Activated CD4-positive, alpha-beta T cell treated with anti-CD3 and anti-CD28 coated beads for 36 hours (primary cell): ENCODE measurements at regions of chr14 and their contacts with region 1.

Region 1: GRCh38 chr14:20400965-20401593 is 12.2 kb downstream of the TEP1 start:
- DNase-seq: peak; percentile 37
- ATAC-seq: peak; percentile 95
- H3K4me3 Mint-ChIP-seq: peak overlapping the region; percentile 29
- H3K27ac Mint-ChIP-seq: peak overlapping the region; percentile 88
- H3K4me1 Mint-ChIP-seq: peaks cover 34% of the 10 kb centered on the region
- H3K27me3 Mint-ChIP-seq: no peaks in the 10 kb centered on the region

Region 2: GRCh38 chr14:20327005-20327869 is 73.8 kb before region 1 on chr14:
- CTCF ChIA-PET with region 1: interaction called, 15 read pairs
- POLR2A ChIA-PET with region 1: interaction called, 4 read pairs
- intact Hi-C with region 1: no loop called
- DNase-seq: no peak
- ATAC-seq: peak; percentile 71
- H3K4me3 Mint-ChIP-seq: no peak overlapping the region
- H3K27ac Mint-ChIP-seq: peak overlapping the region; percentile 44
- H3K4me1 Mint-ChIP-seq: peaks cover 37% of the 10 kb centered on the region
- H3K27me3 Mint-ChIP-seq: no peaks in the 10 kb centered on the region

Region 3: DNA sequence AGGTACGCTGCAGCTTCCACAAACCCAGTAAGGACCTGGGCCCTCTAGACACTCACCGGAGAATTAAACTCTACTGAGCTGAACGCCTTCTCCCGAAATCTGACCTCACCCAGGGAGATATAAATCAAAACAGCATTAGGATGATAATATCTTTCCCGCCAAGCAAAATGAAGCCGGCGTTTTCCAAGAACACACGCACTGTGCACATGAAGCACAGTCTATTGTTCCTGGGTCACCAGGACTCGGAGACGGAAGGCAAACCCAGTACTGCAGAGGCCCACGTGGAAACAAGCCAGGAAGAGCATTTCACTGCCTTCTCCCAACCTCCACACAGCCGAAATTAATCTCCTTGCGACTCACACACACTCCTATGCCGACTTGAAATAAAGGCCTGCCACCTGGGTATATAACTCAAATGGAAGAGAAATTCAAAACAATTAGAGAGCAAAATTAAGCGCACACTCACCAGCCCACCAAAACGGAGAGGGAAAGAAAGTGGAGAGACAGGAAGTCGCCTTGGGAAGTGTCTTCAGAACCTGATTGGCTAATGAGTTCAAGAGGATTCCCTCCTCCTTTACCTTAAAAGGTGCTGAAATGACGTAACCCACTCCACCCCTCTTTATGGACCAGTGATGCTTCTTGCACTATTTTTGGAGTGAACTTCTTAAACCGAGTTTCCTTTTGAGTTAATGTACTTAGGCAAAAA is 68.1 kb before region 1 on chr14 and contains the start of gene CCNB1IP1:
- CTCF ChIA-PET with region 1: interaction called, 15 read pairs
- POLR2A ChIA-PET with region 1: interaction called, 4 read pairs
- intact Hi-C with region 1: loop called in 1 of 2 experiments (anchors 1 kb)
- DNase-seq: peak; percentile 59
- ATAC-seq: peak; percentile 99
- H3K4me3 Mint-ChIP-seq: peak within 1 kb of the TSS; percentile 98
- H3K27ac Mint-ChIP-seq: peak within 1 kb of the TSS; percentile 95
- H3K4me1 Mint-ChIP-seq: peaks cover 35% of the 10 kb centered on the region
- H3K27me3 Mint-ChIP-seq: no peaks in the 10 kb centered on the region
- total RNA-seq, gene CCNB1IP1: 57.4 to 67.0 TPM

Region 4: DNA sequence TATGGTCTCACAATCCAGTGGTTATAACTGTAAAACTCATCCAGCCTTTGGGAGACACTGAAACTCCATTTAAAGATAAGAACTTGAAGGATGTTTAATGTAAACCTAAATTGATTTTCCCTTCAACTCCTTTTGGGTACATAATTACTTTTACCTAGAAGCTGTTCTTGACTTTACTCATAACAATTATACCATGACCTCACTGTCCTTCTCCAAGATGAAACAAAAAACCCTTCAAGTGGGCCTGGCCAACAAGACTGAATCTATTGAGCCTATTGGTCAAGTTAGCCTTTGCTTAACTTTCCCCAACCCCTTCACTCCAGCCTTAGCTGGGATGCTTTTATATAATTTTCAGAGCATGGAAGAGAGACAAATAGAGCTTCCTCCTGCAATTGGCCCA is 35.2 kb before region 1 on chr14:
- CTCF ChIA-PET with region 1: interaction called, 3 read pairs
- POLR2A ChIA-PET with region 1: no interaction called
- intact Hi-C with region 1: loop called in 1 of 2 experiments (anchors 1 kb)
- DNase-seq: no peak
- ATAC-seq: no peak
- H3K4me3 Mint-ChIP-seq: no peak overlapping the region
- H3K27ac Mint-ChIP-seq: peak overlapping the region; percentile 68
- H3K4me1 Mint-ChIP-seq: peaks cover 24% of the 10 kb centered on the region
- H3K27me3 Mint-ChIP-seq: no peaks in the 10 kb centered on the region

Region 5: GRCh38 chr14:20387576-20387975 is 13.5 kb before region 1 on chr14:
- CTCF ChIA-PET with region 1: no interaction called
- POLR2A ChIA-PET with region 1: no interaction called
- intact Hi-C with region 1: no loop called
- DNase-seq: no peak
- ATAC-seq: no peak
- H3K4me3 Mint-ChIP-seq: no peak overlapping the region
- H3K27ac Mint-ChIP-seq: no peak overlapping the region
- H3K4me1 Mint-ChIP-seq: no peaks in the 10 kb centered on the region
- H3K27me3 Mint-ChIP-seq: no peaks in the 10 kb centered on the region

Region 6: GRCh38 chr14:20469242-20469889 is 68.3 kb after region 1 on chr14 and contains the start of gene PNP:
- CTCF ChIA-PET with region 1: interaction called, 3 read pairs
- POLR2A ChIA-PET with region 1: no interaction called
- intact Hi-C with region 1: loop called in 1 of 2 experiments (anchors 2 kb)
- DNase-seq: peak; percentile 93
- ATAC-seq: peak; percentile 93
- H3K4me3 Mint-ChIP-seq: peak within 1 kb of the TSS; percentile 91
- H3K27ac Mint-ChIP-seq: peak within 1 kb of the TSS; percentile 97
- H3K4me1 Mint-ChIP-seq: peaks cover 37% of the 10 kb centered on the region
- H3K27me3 Mint-ChIP-seq: no peaks in the 10 kb centered on the region
- total RNA-seq, gene PNP: 160 to 164 TPM

Region 7: DNA sequence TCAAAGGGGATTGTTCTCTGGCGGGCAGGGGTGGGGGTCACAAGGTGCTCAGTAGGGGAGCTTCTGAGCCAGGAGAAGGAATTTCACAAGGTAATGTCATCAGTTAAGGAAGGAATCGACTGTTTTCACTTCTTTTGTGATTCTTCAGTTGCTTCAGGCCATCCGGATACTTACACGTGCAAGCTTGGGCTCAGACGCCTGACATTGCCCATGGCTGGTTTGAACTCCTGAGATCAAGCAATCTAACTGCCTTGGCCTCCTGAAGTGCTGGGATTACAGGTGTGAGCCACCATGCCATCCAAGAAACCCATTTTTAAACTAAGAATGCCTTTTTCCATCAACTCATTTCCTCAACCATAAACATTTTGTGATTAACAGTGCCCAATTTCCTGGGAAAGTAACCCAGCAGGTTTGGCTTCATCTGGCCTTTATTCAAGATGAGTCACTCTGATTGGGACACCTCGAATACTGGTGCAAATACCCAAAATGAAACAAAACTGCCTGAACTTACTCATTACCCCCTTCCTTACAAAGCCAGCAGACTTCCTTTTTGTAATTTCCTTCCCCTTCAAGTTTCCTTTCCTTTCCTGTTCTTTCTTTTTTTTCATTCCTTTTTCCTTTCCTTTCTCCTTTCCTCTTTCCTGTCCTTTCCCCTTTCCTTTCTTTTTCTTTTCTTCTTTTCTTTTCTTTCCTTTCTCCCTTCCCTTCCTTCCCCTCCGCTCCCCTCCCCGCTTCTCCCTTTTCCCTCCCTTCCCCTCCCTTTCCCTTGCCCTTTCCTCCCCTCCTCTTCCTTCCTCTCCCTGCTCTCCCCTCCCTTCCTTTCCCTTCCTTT is 94.1 kb after region 1 on chr14:
- CTCF ChIA-PET with region 1: no interaction called
- POLR2A ChIA-PET with region 1: no interaction called
- intact Hi-C with region 1: loop called in 1 of 2 experiments (anchors 5 kb)
- DNase-seq: no peak
- ATAC-seq: peak; percentile 73
- H3K4me3 Mint-ChIP-seq: no peak overlapping the region
- H3K27ac Mint-ChIP-seq: peak overlapping the region; percentile 64
- H3K4me1 Mint-ChIP-seq: peaks cover 55% of the 10 kb centered on the region
- H3K27me3 Mint-ChIP-seq: no peaks in the 10 kb centered on the region

Region 8: DNA sequence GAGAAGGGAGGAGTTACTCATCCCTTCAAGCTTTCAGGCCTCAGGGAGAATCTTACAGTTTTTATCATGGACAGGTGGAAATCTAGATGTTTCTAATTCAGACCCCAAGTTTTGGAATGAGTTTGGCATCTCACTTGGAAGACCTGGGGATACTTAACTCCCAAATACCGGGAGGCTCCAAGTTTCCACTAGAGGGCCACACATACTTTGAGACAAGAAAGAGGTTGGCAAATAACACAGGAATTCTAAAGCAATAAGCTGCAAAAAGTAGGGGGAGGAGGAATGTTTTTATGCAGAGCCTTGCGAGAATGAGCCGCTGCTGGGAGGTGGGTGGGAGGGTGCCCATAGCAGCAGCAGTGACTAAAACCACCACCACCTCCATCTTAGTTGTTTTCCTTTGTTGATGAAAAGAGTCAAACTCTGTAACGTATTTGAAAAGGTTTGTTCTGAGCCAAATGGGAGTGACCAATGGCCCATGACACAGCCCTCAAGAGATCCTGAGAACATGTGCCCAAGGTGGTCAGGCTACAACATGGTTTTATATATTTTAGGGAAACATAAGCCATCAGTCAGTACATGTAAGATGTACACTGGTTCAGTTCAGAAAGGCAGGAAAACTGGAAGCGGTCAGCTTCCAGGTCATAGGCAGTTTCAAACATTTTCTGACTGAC is 435.7 kb after region 1 on chr14:
- CTCF ChIA-PET with region 1: no interaction called
- POLR2A ChIA-PET with region 1: no interaction called
- intact Hi-C with region 1: no loop called
- DNase-seq: no peak
- ATAC-seq: no peak
- H3K4me3 Mint-ChIP-seq: no peak overlapping the region
- H3K27ac Mint-ChIP-seq: no peak overlapping the region
- H3K4me1 Mint-ChIP-seq: no peaks in the 10 kb centered on the region
- H3K27me3 Mint-ChIP-seq: no peaks in the 10 kb centered on the region